Prostate gland (tissue), 2 donors: ENCODE measurements at regions of chr15 and their contacts with region 1.

Region 1: GRCh38 chr15:98085003-98085639 is 124.6 kb downstream of the ARRDC4 start:
- DNase-seq: peak; percentile 36
- H3K4me3 ChIP-seq: no peak overlapping the region
- H3K27ac ChIP-seq: no peak overlapping the region
- H3K4me1 ChIP-seq: no peaks in the 10 kb centered on the region
- H3K27me3 ChIP-seq: no peaks in the 10 kb centered on the region
- CTCF ChIP-seq: peak in 3 of 4 experiments; percentile 46 to 85 (median 74)
- POLR2A ChIP-seq: no peak

Region 2: DNA sequence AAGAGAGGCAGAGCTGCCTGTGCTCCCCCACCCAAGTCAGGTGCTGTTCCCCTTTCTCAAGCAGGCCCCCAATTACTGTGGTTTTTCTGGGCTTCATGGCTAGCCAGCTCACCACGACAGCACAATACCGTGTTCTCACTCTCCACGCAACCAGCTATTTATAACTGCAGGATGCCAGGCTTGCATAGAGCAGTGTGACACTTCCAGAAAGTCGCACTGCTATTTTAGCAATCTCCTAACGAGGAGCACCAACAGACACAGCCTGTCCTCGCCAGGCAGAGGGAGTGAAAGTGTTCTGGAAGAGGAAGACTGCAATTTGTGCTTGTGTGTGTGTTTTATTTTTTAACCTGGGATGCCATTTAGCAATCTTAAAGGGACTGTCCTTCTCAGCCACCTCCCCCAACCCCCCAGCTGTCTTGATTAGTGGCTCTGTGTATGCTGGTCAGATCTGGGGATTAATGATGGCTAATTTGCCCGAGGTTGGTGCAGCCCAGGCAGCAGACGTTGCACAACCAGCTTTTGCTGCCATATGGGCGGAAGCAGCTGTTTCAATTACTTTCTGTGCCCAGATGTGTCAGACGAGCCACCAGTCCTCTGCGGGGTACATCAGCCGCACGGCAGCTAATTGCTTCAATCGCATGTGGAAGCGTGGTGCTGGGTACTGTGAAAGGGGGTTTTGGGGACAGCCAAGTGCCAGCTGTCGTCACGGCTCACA is 392.7 kb before region 1 on chr15:
- intact Hi-C with region 1: no loop called
- DNase-seq: no peak
- H3K4me3 ChIP-seq: no peak overlapping the region
- H3K27ac ChIP-seq: no peak overlapping the region
- H3K4me1 ChIP-seq: no peaks in the 10 kb centered on the region
- H3K27me3 ChIP-seq: no peaks in the 10 kb centered on the region
- CTCF ChIP-seq: no peak
- POLR2A ChIP-seq: no peak

Region 3: GRCh38 chr15:97903971-97904572 is 181.0 kb before region 1 on chr15:
- intact Hi-C with region 1: loop called (anchors 5 kb)
- DNase-seq: peak; percentile 51
- H3K4me3 ChIP-seq: no peak overlapping the region
- H3K27ac ChIP-seq: no peak overlapping the region
- H3K4me1 ChIP-seq: no peaks in the 10 kb centered on the region
- H3K27me3 ChIP-seq: no peaks in the 10 kb centered on the region
- CTCF ChIP-seq: peak in 3 of 4 experiments; percentile 41 to 70 (median 63)
- POLR2A ChIP-seq: no peak

Region 4: GRCh38 chr15:98177924-98178592 is 92.9 kb after region 1 on chr15:
- intact Hi-C with region 1: loop called (anchors 5 kb)
- DNase-seq: peak; percentile 28
- H3K4me3 ChIP-seq: no peak overlapping the region
- H3K27ac ChIP-seq: no peak overlapping the region
- H3K4me1 ChIP-seq: no peaks in the 10 kb centered on the region
- H3K27me3 ChIP-seq: no peaks in the 10 kb centered on the region
- CTCF ChIP-seq: peak in 3 of 4 experiments; percentile 34 to 70 (median 62)
- POLR2A ChIP-seq: no peak

Region 5: DNA sequence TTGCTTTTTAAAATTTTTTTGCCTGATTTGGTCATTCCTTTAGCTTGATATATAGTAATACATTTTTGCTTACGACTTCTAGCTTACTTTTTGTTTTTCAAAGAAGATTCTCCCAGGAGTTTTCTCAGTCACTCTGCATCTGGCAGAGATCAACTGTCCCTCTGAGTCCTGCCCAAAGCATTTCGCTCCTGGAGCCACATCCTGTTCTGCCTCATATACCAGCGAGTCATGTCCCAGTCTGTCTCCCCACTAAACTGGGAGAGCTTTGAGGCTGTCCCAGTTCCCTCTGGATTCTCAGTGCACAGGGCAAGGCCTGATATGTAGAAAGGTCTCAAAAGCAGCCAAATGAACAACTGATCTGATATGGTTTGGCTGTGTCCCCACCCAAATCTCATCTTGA is 201.7 kb after region 1 on chr15:
- intact Hi-C with region 1: loop called (anchors 10 kb)
- DNase-seq: no peak
- H3K4me3 ChIP-seq: no peak overlapping the region
- H3K27ac ChIP-seq: no peak overlapping the region
- H3K4me1 ChIP-seq: no peaks in the 10 kb centered on the region
- H3K27me3 ChIP-seq: no peaks in the 10 kb centered on the region
- CTCF ChIP-seq: no peak
- POLR2A ChIP-seq: no peak